CD4-positive, alpha-beta T cell (primary cell): ENCODE measurements at regions of chr18 and their contacts with region 1.

Region 1: DNA sequence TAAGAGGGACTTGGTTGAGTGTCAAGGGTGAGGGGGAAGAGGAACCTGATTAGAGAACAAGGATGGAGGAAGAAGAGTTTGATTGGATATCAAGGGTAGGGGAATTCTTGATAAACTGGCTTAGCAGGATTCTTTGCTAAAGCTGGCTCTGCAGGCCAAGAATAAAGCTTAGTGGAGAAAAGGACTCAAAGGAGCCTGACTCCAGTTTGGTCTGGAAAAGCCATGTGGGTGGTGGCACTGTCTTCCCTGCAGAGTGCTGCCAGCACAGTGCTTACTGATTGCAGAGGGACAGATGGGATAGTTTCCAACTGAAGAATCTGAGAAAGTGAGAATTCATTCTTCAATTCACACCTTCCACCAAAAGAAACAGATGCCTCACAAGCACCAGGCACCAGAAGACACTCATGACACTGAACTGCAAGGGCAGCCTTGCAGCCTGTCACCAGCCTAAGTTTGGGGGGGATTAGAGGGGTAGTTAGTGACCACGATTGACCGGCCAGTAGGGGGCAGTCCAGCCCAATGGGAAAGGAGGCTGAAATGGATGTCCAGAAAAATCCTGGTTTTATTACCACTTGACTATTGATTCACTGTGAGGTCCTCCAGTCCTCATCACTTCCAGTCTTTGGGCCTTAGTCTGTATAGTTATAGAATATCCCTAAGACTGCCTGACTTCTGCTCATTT is 334.5 kb downstream of the SMAD2 start:
- DNase-seq: peak in 2 of 14 experiments; percentile 2 to 7
- ATAC-seq: no peak
- H3K4me3 ChIP-seq: no peak overlapping the region
- H3K4me3 Mint-ChIP-seq: no peak overlapping the region
- H3K27ac ChIP-seq: no peak overlapping the region
- H3K27ac Mint-ChIP-seq: no peak overlapping the region
- H3K4me1 ChIP-seq: no peaks in the 10 kb centered on the region
- H3K4me1 Mint-ChIP-seq: no peaks in the 10 kb centered on the region
- H3K27me3 ChIP-seq: peaks cover 10 to 14% of the 10 kb centered on the region in 2 experiments
- H3K27me3 Mint-ChIP-seq: peaks cover 53% of the 10 kb centered on the region
- CTCF ChIP-seq: no peak

Region 2: GRCh38 chr18:47658498-47658897 is 62.5 kb after region 1 on chr18:
- CTCF ChIA-PET with region 1: no interaction called
- POLR2A ChIA-PET with region 1: no interaction called
- intact Hi-C with region 1: loop called in 1 of 2 experiments (anchors 10 kb)
- DNase-seq: no peak
- ATAC-seq: no peak
- H3K4me3 ChIP-seq: no peak overlapping the region
- H3K4me3 Mint-ChIP-seq: no peak overlapping the region
- H3K27ac ChIP-seq: no peak overlapping the region
- H3K27ac Mint-ChIP-seq: no peak overlapping the region
- H3K4me1 ChIP-seq: no peaks in the 10 kb centered on the region
- H3K4me1 Mint-ChIP-seq: no peaks in the 10 kb centered on the region
- H3K27me3 ChIP-seq: peaks cover 3 to 5% of the 10 kb centered on the region in 2 experiments
- H3K27me3 Mint-ChIP-seq: peaks cover 10% of the 10 kb centered on the region
- CTCF ChIP-seq: no peak